ENCODE measurements at regions of chr20 and their contacts with region 1.

Region 1: DNA sequence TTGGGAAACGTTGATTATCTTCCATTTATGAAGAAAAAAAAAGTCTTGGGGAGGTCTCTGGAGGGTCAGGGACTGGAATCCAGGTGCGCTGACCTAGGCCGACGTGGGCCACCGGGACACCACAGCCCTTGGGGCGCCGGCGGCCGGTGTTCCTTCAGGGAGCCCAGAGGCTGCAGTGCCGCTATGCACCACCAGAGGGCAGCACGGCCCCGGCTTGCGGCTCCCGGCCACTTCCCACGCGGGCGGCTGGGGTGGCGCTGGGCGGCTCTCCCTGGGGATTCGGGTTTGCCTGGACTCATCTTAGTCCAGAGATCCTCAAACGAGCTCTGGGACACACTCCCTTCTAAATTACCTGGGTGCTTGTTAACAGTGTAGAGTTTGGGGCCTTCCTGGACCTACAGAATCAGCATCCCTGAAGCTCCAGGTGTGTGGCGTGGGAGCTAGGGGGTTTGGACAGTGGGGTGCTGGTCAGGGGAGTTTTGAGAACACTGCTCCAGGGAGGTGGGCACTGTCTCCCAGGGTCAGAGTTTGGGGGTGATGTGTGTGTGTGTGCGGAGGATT is 23.0 kb upstream of the GTSF1L start:
- DNase-seq: peak; percentile 89
- ATAC-seq: no peak
- H3K4me3 Mint-ChIP-seq: no peak overlapping the region
- H3K27ac Mint-ChIP-seq: peak overlapping the region; percentile 65
- H3K4me1 Mint-ChIP-seq: peaks cover 48% of the 10 kb centered on the region
- H3K27me3 Mint-ChIP-seq: peaks cover 11% of the 10 kb centered on the region
- CTCF ChIP-seq: peak; percentile 99

Region 2: DNA sequence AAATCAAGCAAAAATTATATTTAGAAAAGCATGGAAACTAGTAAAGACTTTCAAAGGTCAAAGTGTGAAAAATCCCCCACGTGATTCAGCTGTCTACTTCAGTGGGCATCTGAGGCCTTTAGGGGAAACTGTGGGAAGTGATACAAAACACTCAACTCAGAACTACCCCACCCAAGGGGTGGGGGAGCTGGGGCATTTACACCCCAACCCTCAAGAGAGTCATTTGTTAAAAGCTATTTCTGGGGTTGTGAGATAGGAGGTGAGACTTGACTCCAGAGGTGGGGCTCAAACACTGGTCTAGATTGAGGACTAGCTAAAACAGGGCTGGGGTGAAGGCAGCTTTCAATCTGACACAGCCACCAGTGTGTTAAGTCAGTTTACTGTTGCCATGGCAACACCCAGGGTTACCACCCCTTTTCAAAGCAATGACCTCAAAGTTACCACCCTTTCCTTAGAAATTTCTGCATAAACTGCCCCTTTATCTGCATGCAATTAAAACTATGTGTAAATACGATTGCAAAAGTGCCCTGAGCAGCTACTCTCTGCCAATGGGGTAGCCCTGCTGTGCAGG is 13.1 kb before region 1 on chr20:
- CTCF ChIA-PET with region 1: interaction called, 15 read pairs
- POLR2A ChIA-PET with region 1: interaction called, 8 read pairs
- intact Hi-C with region 1: no loop called
- DNase-seq: peak; percentile 78
- ATAC-seq: peak; percentile 90
- H3K4me3 Mint-ChIP-seq: no peak overlapping the region
- H3K27ac Mint-ChIP-seq: peak overlapping the region; percentile 67
- H3K4me1 Mint-ChIP-seq: peaks cover 29% of the 10 kb centered on the region
- H3K27me3 Mint-ChIP-seq: no peaks in the 10 kb centered on the region
- CTCF ChIP-seq: no peak

Region 3: DNA sequence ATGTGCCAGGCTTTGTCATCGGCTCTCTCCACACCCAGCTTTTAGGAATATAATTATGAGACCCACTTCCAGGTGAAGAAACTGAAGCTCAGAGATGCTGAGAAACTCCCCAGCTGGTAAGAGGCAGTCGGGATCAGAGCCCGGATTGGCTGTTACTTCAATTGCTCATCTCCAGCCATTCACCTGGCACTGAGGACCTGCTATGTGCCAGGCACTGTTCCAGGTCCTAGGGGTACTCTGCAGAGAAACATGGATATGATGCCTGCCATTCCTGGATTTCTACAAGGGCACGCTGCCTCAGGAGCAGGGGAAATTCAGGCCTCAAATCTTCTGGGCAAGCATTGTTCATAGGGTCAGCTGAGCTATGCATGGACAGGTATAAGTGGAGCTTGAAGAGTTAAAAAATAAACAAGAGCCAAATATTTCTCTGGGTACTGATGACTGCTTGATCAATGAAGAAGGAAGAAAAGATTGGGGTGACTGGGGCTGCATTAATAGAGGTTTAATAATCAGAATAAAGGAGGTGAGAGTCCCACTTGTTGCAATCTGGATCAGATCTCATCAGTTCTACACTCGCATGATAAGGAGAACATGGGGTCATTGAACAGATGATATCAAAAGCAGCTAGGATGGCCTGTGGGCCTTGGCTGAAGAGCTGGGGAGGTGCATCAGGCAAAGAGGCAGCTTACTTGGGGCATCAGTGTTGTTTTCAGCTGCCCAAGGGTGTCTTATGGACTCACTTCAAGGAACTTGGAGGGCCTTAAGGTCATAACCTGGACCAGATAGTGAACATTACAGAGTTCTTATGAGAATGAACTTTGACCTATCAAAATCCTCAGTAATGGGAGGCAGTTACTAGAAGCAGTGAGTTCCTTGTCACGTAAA is 83.9 kb after region 1 on chr20:
- CTCF ChIA-PET with region 1: interaction called, 10 read pairs
- POLR2A ChIA-PET with region 1: interaction called, 3 read pairs
- intact Hi-C with region 1: no loop called
- DNase-seq: no peak
- ATAC-seq: no peak
- H3K4me3 Mint-ChIP-seq: no peak overlapping the region
- H3K27ac Mint-ChIP-seq: no peak overlapping the region
- H3K4me1 Mint-ChIP-seq: peaks cover 14% of the 10 kb centered on the region
- H3K27me3 Mint-ChIP-seq: peaks cover 30% of the 10 kb centered on the region
- CTCF ChIP-seq: no peak

Region 4: DNA sequence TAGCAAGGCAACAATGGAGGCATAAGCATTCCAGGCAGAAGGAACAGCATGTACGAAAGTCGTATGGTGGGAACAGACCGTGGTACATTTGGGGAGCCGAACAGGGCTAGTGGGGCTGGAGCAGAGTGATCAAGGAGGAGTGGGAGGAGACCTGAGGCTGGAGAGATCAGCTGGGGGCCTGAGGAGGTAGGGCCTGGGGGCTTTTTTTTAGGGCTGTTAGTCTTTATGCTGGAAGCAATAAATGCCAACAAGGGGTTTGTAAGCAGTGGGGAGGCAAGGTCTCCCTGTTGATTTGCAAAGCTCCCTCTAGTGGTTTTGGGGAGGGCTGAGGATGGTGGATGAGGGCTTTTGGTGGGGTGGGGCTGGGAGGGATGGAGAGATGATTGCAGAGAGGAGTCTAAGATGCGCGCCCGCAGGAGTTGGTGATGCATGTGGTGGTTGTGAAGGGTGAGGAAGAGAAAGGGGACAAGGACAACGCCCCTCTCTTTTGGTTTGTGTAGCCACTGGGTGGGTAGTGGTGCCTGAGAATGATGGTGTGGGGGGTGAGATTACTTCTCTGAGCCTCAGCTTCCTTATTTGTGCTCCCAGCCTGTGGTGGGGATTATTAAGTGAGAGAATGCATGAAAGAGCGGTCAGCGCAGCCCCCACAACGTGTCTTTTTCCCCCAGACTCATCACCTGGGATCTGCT is 90.7 kb after region 1 on chr20:
- CTCF ChIA-PET with region 1: interaction called, 28 read pairs
- POLR2A ChIA-PET with region 1: interaction called, 8 read pairs
- intact Hi-C with region 1: loop called (anchors 2 kb)
- DNase-seq: peak; percentile 69
- ATAC-seq: peak; percentile 21
- H3K4me3 Mint-ChIP-seq: no peak overlapping the region
- H3K27ac Mint-ChIP-seq: no peak overlapping the region
- H3K4me1 Mint-ChIP-seq: peaks cover 44% of the 10 kb centered on the region
- H3K27me3 Mint-ChIP-seq: peaks cover 28% of the 10 kb centered on the region
- CTCF ChIP-seq: peak; percentile 48

Region 5: DNA sequence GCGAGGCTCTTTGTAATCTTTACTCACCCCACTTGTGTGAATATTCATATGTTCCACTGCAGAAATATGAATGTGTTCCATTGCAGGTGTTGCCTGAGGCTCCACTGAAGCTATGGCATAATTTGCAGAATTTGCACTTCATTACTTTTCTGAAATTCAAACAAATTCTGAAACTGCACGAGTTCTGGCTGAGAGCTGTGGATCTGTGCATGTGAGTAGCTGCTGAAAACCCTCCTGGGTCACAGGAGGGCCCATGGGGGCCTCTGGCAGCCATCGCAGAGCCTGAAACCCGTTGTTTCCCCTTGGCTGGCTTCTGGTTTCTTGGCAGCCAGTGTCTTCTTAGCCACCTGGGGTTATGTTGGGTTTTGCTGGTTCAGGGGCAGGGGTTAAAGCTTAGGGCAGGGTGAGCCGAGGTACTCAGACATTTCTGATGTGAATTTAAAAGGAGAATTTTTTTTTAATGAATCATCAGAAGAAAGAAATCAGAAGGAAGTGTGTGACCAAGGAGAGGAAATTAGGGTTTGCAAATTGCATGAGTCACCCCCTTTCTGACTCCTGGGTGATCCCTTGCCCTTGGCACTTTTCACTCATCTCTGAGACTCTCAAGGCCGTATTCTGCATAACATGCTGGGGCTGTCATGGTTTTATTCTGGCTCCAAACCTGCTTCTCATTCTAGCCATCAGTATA is 205.4 kb after region 1 on chr20:
- CTCF ChIA-PET with region 1: interaction called, 7 read pairs
- POLR2A ChIA-PET with region 1: interaction called, 3 read pairs
- intact Hi-C with region 1: loop called (anchors 10 kb)
- DNase-seq: peak; percentile 73
- ATAC-seq: peak; percentile 93
- H3K4me3 Mint-ChIP-seq: no peak overlapping the region
- H3K27ac Mint-ChIP-seq: peak overlapping the region; percentile 50
- H3K4me1 Mint-ChIP-seq: peaks cover 72% of the 10 kb centered on the region
- H3K27me3 Mint-ChIP-seq: peaks cover 39% of the 10 kb centered on the region
- CTCF ChIP-seq: no peak

Region 6: DNA sequence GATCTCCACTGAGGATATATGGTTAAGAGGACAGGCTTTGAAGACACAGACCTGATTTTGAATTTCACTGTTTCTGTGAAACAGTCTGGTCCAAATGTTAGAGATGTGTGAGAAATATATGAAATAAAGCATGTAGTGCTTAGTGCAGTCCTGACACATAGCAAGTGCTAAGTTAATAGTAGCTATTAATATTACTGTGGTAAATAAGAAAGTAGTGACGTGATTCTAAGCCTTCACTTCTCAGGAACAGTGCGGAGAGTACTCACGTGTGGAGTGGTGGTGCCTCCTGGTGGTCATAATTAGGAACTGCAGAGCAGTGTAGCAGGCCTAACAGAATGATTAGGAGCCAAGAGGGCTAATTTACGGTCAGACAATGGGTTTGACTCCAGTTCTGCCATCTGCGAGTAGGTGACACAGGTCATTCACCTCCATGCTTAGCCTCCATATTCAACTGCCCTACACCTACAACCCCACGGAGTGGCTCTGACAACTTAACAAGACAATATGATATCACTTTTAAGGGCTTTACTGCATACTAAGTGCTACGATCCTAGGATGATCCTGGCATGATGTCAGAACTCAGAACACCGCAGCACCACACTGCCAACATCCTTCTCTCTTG is 330.9 kb after region 1 on chr20:
- CTCF ChIA-PET with region 1: interaction called, 60 read pairs
- POLR2A ChIA-PET with region 1: no interaction called
- intact Hi-C with region 1: loop called (anchors 2 kb)
- DNase-seq: peak; percentile 84
- ATAC-seq: peak; percentile 98
- H3K4me3 Mint-ChIP-seq: no peak overlapping the region
- H3K27ac Mint-ChIP-seq: no peak overlapping the region
- H3K4me1 Mint-ChIP-seq: peaks cover 6% of the 10 kb centered on the region
- H3K27me3 Mint-ChIP-seq: no peaks in the 10 kb centered on the region
- CTCF ChIP-seq: peak; percentile 98